Endothelial cell of umbilical vein (primary cell): ENCODE measurements at regions of chr9 and their contacts with region 1.

Region 1: GRCh38 chr9:97615439-97616072 is 17.6 kb downstream of the TSTD2 start:
- DNase-seq: peak; percentile 77
- H3K4me3 ChIP-seq: no peak overlapping the region
- H3K27ac ChIP-seq: no peak overlapping the region
- H3K4me1 ChIP-seq: no peaks in the 10 kb centered on the region
- H3K27me3 ChIP-seq: no peaks in the 10 kb centered on the region
- CTCF ChIP-seq: peak; percentile 62 to 68
- POLR2A ChIP-seq: no peak

Region 2: DNA sequence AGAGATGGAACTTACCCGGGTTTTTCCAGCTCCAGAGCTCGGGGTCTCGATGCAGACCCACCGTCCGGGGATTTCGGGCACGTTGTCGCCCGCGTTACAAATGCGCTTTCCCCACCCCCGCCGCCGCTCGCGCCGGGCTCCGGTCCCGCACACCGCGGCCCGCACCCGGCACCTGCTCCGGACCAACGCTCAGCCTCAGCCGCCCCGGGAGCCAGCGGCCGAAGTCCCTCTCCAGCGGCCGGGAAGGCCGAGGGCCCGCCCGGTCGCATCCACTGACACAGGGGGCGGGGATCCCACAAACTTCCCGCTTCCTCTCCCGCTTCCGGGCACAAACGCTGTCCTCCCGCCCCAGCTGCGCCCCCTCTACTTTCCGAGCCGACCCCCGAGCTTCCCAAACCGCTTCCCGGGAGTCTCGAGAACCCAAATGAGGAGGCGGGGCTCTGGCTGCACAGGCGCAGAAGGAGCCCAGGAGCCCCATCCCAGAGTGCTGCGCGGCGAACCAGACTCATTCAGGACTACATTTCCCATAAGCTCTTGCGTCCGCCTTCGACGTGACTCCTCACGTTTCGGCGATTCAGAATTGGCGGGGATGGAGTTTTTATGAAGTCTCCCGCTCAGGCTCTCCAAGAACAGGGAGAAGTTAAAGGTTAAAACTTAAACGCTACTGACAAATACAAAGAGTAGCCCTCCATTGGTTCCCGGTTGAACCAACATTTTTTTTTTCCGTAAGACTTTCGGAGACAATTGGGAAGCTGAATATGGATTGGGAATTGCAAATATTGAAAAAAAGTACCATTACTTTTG is 761.3 kb before region 1 on chr9 and contains the start of gene ZNF782:
- CTCF ChIA-PET with region 1: interaction called, 18 read pairs
- POLR2A ChIA-PET with region 1: no interaction called
- dilution Hi-C with region 1: no loop called
- intact Hi-C with region 1: loop called (anchors 5 kb)
- DNase-seq: peak; percentile 95
- H3K4me3 ChIP-seq: peak within 1 kb of the TSS; percentile 56 to 86 (median 86)
- H3K27ac ChIP-seq: peak within 1 kb of the TSS; percentile 6
- H3K4me1 ChIP-seq: peaks cover 11% of the 10 kb centered on the region
- H3K27me3 ChIP-seq: peaks cover 0 to 2% of the 10 kb centered on the region in 2 experiments
- CTCF ChIP-seq: no peak
- POLR2A ChIP-seq: no peak
- total RNA-seq, gene ZNF782: 3.6 and 4.4 TPM in 2 replicates

Region 3: DNA sequence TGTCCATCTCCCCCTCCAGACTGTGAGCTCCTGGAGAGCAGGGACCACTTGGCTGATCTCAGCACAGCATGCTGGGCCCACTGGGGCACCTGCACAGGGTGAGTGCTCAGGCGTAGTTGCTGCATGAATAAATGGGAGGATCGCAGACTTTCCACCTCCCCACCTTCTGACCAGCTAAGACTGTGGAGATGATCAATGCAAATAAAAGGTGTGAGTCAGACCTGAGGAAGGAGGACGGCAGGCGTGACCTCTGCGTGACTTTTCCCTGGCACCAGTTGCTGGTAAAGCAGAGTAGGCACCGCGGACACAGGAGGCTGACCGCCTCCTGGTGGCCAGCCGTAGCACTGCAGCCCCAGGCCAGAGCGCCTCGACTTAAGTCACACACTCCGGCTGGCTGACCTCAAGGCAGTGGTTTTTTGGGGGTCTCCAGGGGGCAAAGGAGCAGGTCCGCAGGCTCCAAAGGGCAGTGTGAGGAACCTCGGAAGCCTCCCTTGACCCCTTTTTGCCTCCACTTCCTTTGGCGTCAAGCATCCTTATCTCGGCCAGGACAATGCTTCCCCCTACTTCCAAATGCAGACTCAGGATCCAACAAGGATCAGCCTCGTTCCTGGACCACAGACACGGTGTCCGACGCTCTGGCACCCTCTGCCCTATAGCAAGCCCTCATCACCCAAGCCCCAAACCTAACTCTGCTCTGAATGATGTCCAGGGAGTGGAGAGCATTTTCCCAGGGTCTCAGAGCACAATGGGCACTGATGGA is 216.4 kb before region 1 on chr9:
- CTCF ChIA-PET with region 1: interaction called, 138 read pairs
- POLR2A ChIA-PET with region 1: no interaction called
- dilution Hi-C with region 1: no loop called
- intact Hi-C with region 1: no loop called
- DNase-seq: peak; percentile 76
- H3K4me3 ChIP-seq: no peak overlapping the region
- H3K27ac ChIP-seq: no peak overlapping the region
- H3K4me1 ChIP-seq: no peaks in the 10 kb centered on the region
- H3K27me3 ChIP-seq: peaks cover 0 to 5% of the 10 kb centered on the region in 2 experiments
- CTCF ChIP-seq: peak; percentile 97 to 99
- POLR2A ChIP-seq: no peak

Region 4: GRCh38 chr9:97459099-97459725 is 156.3 kb before region 1 on chr9:
- CTCF ChIA-PET with region 1: interaction called, 17 read pairs
- POLR2A ChIA-PET with region 1: no interaction called
- dilution Hi-C with region 1: loop called (anchors 25 kb)
- intact Hi-C with region 1: no loop called
- DNase-seq: no peak
- H3K4me3 ChIP-seq: no peak overlapping the region
- H3K27ac ChIP-seq: no peak overlapping the region
- H3K4me1 ChIP-seq: no peaks in the 10 kb centered on the region
- H3K27me3 ChIP-seq: no peaks in the 10 kb centered on the region
- CTCF ChIP-seq: no peak
- POLR2A ChIP-seq: no peak

Region 5: GRCh38 chr9:97479496-97480159 is 135.9 kb before region 1 on chr9:
- CTCF ChIA-PET with region 1: interaction called, 537 read pairs
- POLR2A ChIA-PET with region 1: no interaction called
- dilution Hi-C with region 1: loop called (anchors 25 kb)
- intact Hi-C with region 1: no loop called
- DNase-seq: no peak
- H3K4me3 ChIP-seq: no peak overlapping the region
- H3K27ac ChIP-seq: no peak overlapping the region
- H3K4me1 ChIP-seq: no peaks in the 10 kb centered on the region
- H3K27me3 ChIP-seq: no peaks in the 10 kb centered on the region
- CTCF ChIP-seq: no peak
- POLR2A ChIP-seq: no peak

Region 6: GRCh38 chr9:97632985-97633858 is 17.7 kb after region 1 on chr9 and contains the starts of genes NCBP1 and TSTD2:
- CTCF ChIA-PET with region 1: interaction called, 28 read pairs
- POLR2A ChIA-PET with region 1: interaction called, 3 read pairs
- dilution Hi-C with region 1: no loop called
- intact Hi-C with region 1: no loop called
- DNase-seq: peak; percentile 99
- H3K4me3 ChIP-seq: peak within 1 kb of the TSS; percentile 83 to 100 (median 99)
- H3K27ac ChIP-seq: peak within 1 kb of the TSS; percentile 94
- H3K4me1 ChIP-seq: peaks cover 28% of the 10 kb centered on the region
- H3K27me3 ChIP-seq: no peaks in the 10 kb centered on the region
- CTCF ChIP-seq: peak in 1 of 2 donors; percentile 12
- POLR2A ChIP-seq: peak; percentile 90
- total RNA-seq, gene NCBP1: 42.8 and 45.3 TPM in 2 replicates
- total RNA-seq, gene TSTD2: 15.1 and 15.9 TPM in 2 replicates

Region 7: DNA sequence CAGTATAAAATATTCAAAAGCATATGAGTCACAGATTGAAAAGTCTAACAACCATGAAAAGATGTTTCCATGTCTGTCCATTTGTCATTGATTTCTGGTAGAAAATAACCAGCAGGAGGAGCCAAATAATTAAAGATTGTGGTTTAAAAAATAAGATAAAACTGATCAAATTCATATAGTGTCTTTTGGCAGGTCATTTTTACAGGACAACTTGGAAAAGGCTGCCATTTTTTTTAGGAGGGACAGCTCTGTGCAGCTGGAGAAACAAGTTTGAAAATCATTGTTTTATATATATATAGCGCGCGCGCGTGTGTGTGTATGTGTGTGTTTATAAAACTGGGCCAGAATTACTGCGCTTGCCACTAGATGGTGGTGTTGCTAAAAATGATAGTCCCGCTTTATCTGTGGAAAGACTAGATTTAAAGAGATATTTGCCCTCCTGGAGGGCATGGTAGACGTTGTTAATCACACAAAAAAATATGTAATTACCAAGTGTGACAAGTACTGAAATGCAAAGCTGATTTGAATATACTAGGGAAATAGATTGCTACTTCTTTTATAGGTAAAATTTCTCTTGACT is 308.1 kb after region 1 on chr9:
- CTCF ChIA-PET with region 1: no interaction called
- POLR2A ChIA-PET with region 1: no interaction called
- dilution Hi-C with region 1: no loop called
- intact Hi-C with region 1: no loop called
- DNase-seq: peak; percentile 86
- H3K4me3 ChIP-seq: peak overlapping the region in 2 of 3 experiments; percentile 9 to 37
- H3K27ac ChIP-seq: no peak overlapping the region
- H3K4me1 ChIP-seq: peaks cover 11% of the 10 kb centered on the region
- H3K27me3 ChIP-seq: peaks cover 8 to 29% of the 10 kb centered on the region in 2 experiments
- CTCF ChIP-seq: peak; percentile 61 to 62
- POLR2A ChIP-seq: no peak